AG04450 (cell line): ENCODE measurements at regions of chr5 and their contacts with region 1.

Region 1: GRCh38 chr5:160390787-160391696 is 8.8 kb downstream of the FAM200C start:
- DNase-seq: no peak
- H3K4me3 ChIP-seq: no peak overlapping the region
- H3K27ac ChIP-seq: no peak overlapping the region
- H3K27me3 ChIP-seq: no peaks in the 10 kb centered on the region
- CTCF ChIP-seq: peak; percentile 56

Region 2: DNA sequence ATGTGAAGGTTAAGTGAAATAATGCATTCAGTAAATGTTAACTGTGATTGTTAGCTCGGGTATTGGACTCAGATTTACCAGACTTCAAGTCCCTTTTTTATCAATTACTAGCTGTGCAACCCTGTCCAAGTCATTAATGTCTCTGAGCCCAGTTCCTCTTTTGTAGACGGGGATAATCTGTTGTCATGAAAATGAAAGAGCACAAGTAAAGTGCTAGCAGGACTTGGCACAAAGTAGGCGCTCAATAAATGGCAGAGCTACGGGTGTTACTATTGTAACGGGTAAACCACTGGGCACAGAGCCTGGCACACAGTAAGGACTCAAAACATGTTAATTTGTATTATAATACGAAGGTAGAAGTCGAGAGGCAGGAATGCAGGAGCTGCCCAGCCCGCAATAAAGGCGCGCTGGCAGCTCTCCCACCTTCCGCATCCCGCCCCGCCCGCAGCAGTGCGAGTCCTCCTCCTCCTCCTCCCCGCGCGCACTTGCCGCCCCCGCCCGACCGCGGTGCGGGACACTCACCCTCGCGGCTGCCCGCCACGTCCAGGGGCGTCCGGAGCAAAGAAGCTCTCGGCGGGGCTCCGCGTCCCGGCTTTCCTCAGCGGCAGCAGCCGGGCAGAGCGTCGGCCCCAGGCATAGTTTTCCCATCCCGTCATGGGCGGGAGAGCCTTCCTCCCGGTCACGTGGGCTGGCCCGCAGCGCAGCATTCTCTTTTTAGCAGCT is 20.9 kb before region 1 on chr5 and contains the start of gene C1QTNF2:
- CTCF ChIA-PET with region 1: interaction called, 55 read pairs
- POLR2A ChIA-PET with region 1: no interaction called
- DNase-seq: peak; percentile 48
- H3K4me3 ChIP-seq: peak within 1 kb of the TSS; percentile 65
- H3K27ac ChIP-seq: peak within 1 kb of the TSS; percentile 2
- H3K27me3 ChIP-seq: peaks cover 14% of the 10 kb centered on the region
- CTCF ChIP-seq: no peak
- polyA plus RNA-seq, gene C1QTNF2: 1.1 TPM in 2 replicates

Region 3: GRCh38 chr5:160379511-160379910 is 11.5 kb before region 1 on chr5:
- CTCF ChIA-PET with region 1: interaction called, 55 read pairs
- POLR2A ChIA-PET with region 1: interaction called, 3 read pairs
- DNase-seq: no peak
- H3K4me3 ChIP-seq: no peak overlapping the region
- H3K27ac ChIP-seq: no peak overlapping the region
- H3K27me3 ChIP-seq: peaks cover 6% of the 10 kb centered on the region
- CTCF ChIP-seq: no peak

Region 4: GRCh38 chr5:160445132-160445531 is 54.1 kb after region 1 on chr5:
- CTCF ChIA-PET with region 1: no interaction called
- POLR2A ChIA-PET with region 1: no interaction called
- DNase-seq: no peak
- H3K4me3 ChIP-seq: no peak overlapping the region
- H3K27ac ChIP-seq: no peak overlapping the region
- H3K27me3 ChIP-seq: peaks cover 2% of the 10 kb centered on the region
- CTCF ChIP-seq: no peak